ENCODE measurements at regions of chrX and their contacts with region 1.

Region 1: DNA sequence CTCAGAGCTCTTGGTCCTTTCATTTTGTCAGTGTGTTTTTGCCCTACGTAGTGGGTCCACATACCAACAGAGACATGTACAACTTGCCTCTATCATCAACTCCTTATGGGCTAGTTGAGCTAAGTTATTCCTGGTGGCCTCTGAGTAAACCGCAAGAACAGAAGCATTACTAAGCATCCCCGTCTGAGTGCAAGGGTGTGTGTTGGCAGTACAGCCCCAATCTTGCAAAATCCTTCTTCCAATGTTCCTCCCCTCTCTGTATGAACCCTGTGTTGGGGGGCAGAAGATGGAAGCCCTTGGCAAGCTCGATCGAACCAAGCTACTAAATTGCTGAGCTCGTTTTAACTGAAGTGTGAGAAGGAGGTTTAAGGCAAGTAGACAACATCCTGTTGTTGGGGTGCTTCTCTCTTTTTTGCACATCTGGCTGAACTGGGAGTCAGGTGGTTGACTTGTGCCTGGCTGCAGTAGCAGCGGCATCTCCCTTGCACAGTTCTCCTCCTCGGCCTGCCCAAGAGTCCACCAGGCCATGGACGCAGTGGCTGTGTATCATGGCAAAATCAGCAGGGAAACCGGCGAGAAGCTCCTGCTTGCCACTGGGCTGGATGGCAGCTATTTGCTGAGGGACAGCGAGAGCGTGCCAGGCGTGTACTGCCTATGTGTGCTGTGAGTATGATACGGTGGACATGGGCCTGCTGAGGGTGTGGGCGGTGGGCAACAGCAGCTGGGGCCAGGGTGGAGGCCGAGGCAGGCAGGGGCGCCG is at the start of gene SH2D1A:
- DNase-seq: peak; percentile 29
- H3K4me3 Mint-ChIP-seq: peak within 1 kb of the TSS; percentile 86
- H3K27ac Mint-ChIP-seq: peak within 1 kb of the TSS; percentile 95
- H3K4me1 Mint-ChIP-seq: peaks cover 45% of the 10 kb centered on the region
- H3K27me3 Mint-ChIP-seq: no peaks in the 10 kb centered on the region
- total RNA-seq, gene SH2D1A: 17.0 to 17.2 TPM

Region 2: GRCh38 chrX:123450221-123450620 is 896.1 kb before region 1 on chrX:
- CTCF ChIA-PET with region 1: no interaction called
- intact Hi-C with region 1: no loop called
- DNase-seq: no peak
- H3K4me3 Mint-ChIP-seq: no peak overlapping the region
- H3K27ac Mint-ChIP-seq: no peak overlapping the region
- H3K4me1 Mint-ChIP-seq: no peaks in the 10 kb centered on the region
- H3K27me3 Mint-ChIP-seq: no peaks in the 10 kb centered on the region

Region 3: GRCh38 chrX:123833387-123833786 is 512.9 kb before region 1 on chrX:
- CTCF ChIA-PET with region 1: no interaction called
- intact Hi-C with region 1: loop called (anchors 10 kb)
- DNase-seq: peak; percentile 71
- H3K4me3 Mint-ChIP-seq: no peak overlapping the region
- H3K27ac Mint-ChIP-seq: no peak overlapping the region
- H3K4me1 Mint-ChIP-seq: peaks cover 8% of the 10 kb centered on the region
- H3K27me3 Mint-ChIP-seq: peaks cover 7% of the 10 kb centered on the region

Region 4: GRCh38 chrX:123878252-123878721 is 468.0 kb before region 1 on chrX:
- CTCF ChIA-PET with region 1: no interaction called
- intact Hi-C with region 1: loop called (anchors 5 kb)
- DNase-seq: no peak
- H3K4me3 Mint-ChIP-seq: no peak overlapping the region
- H3K27ac Mint-ChIP-seq: no peak overlapping the region
- H3K4me1 Mint-ChIP-seq: peaks cover 34% of the 10 kb centered on the region
- H3K27me3 Mint-ChIP-seq: no peaks in the 10 kb centered on the region

Region 5: DNA sequence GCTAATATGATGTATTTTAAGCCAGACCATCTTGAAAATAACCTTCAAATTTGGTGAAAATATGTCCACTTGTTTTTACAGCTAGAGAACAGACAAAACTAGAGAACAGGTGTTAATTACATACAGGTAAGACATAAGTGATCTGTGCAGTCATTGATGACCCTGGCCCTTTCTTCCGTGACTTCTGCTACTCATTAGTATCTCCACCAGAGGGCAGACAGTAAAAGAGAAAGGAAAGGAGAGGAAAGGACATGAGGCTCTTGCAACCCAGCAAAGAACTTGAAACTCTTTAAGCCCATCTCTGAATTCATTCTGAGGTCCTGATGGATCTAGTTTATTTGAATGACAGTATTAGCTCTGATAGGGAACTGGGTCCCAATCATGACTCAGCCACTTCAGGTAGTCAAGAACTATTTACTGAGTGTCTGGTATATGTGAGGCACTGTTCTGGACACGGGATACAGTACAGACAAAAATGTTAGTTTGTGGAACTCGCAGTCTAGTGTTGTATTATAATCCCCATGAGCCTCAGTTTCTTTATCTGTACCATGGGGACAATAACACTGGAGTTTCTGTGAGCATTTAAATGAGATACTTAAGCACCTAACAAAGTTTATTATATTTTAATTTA is 134.9 kb before region 1 on chrX:
- CTCF ChIA-PET with region 1: interaction called, 4 read pairs
- intact Hi-C with region 1: loop called (anchors 1 kb)
- DNase-seq: peak; percentile 27
- H3K4me3 Mint-ChIP-seq: no peak overlapping the region
- H3K27ac Mint-ChIP-seq: no peak overlapping the region
- H3K4me1 Mint-ChIP-seq: peaks cover 38% of the 10 kb centered on the region
- H3K27me3 Mint-ChIP-seq: no peaks in the 10 kb centered on the region

Region 6: DNA sequence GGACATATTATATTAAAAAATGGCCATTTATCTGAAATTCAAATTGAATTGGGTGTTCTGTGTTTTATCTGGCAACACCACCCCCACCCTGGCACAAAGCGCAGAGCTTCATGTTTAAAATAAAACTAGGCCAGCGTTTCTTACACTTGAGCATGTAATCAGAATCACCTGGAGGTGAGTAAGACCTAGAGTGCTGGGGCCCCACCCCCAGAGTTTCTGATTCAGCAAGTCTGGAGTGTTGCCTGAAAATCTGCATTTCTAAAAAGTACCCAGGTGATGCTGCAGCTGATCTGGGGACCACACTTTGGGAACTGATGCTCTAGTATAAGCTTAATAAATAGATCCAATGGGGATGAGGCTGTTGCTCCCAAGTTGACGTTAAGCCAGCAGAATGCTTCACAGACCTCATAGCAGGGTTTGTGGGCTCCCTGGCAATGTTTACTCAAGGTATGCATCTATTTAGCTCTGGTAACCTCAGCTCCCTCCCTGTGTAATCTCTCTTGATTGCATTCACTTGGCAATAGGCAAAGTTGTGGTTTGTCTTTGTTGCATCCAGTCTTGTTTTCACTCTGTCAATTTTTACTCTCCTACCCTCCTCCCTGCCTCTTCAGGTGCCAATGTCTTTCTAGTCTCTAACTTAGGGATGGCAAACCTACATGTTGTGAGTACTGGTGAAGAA is 113.6 kb before region 1 on chrX:
- CTCF ChIA-PET with region 1: interaction called, 3 read pairs
- intact Hi-C with region 1: loop called (anchors 1 kb)
- DNase-seq: peak; percentile 80
- H3K4me3 Mint-ChIP-seq: no peak overlapping the region
- H3K27ac Mint-ChIP-seq: no peak overlapping the region
- H3K4me1 Mint-ChIP-seq: peaks cover 19% of the 10 kb centered on the region
- H3K27me3 Mint-ChIP-seq: no peaks in the 10 kb centered on the region

Region 7: DNA sequence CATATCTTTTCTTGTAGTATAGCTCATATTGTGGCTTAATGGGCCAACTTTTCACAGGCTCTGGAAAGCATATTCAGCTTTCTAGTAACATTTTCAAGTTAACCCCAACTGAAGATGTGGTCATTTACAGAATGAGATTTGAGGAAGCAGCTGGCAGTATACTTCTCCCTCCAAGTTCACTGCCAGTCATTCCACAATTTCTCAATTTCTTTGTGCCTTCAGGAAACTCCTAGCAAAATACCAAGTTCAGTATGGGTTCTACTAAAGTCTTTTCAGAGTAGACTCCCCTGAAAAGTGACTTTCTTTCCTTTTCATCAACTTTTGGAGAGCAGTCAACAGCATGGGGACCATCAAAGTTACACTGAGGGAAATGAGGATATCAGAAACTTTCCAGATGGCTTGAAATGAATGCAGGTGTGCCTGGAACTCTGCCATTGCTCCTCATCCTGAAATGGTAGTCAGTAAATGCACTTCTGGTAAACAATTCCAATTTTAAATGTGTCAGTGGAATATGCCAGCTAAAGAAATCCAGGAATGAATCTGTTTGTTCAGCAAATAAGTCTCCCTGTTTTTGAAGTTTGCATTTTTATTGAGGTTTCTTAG is 95.4 kb before region 1 on chrX:
- CTCF ChIA-PET with region 1: no interaction called
- intact Hi-C with region 1: no loop called
- DNase-seq: no peak
- H3K4me3 Mint-ChIP-seq: no peak overlapping the region
- H3K27ac Mint-ChIP-seq: no peak overlapping the region
- H3K4me1 Mint-ChIP-seq: peaks cover 4% of the 10 kb centered on the region
- H3K27me3 Mint-ChIP-seq: no peaks in the 10 kb centered on the region

Region 8: DNA sequence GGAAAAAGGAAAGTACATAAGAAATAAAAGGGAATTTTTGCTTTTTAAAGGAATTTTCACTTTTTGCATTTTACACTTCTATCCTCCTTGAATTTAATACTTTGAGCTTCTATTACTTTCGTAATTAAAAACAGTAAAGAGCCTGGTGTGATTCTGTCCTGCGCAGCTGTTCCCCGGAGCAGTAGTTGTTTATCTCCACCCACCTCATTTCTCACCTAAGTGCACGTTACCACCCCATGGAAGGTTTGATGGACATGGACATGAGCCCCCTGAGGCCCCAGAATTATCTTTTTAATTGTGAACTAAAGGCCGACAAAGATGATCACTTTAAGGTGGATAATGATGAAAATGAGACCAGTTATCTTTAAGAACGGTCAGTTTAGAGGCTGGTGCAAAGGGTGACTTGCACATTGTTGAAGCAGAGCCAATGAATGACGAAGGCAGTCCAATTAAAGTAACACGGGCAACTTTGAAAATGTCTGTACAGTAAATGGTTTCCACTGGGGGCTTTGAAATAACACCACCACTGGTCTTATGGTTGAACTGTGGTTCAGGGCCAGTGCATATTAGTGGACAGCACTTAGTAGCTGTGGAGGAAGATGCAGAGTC is 65.9 kb before region 1 on chrX:
- CTCF ChIA-PET with region 1: no interaction called
- intact Hi-C with region 1: loop called (anchors 5 kb)
- DNase-seq: no peak
- H3K4me3 Mint-ChIP-seq: no peak overlapping the region
- H3K27ac Mint-ChIP-seq: peak overlapping the region; percentile 46
- H3K4me1 Mint-ChIP-seq: peaks cover 17% of the 10 kb centered on the region
- H3K27me3 Mint-ChIP-seq: no peaks in the 10 kb centered on the region

Region 9: GRCh38 chrX:124325732-124326131 is 20.6 kb before region 1 on chrX:
- CTCF ChIA-PET with region 1: no interaction called
- intact Hi-C with region 1: loop called (anchors 2 kb)
- DNase-seq: no peak
- H3K4me3 Mint-ChIP-seq: no peak overlapping the region
- H3K27ac Mint-ChIP-seq: no peak overlapping the region
- H3K4me1 Mint-ChIP-seq: peaks cover 23% of the 10 kb centered on the region
- H3K27me3 Mint-ChIP-seq: no peaks in the 10 kb centered on the region

Region 10: GRCh38 chrX:124690495-124690894 is 344.2 kb after region 1 on chrX:
- CTCF ChIA-PET with region 1: no interaction called
- intact Hi-C with region 1: no loop called
- DNase-seq: no peak
- H3K4me3 Mint-ChIP-seq: no peak overlapping the region
- H3K27ac Mint-ChIP-seq: no peak overlapping the region
- H3K4me1 Mint-ChIP-seq: no peaks in the 10 kb centered on the region
- H3K27me3 Mint-ChIP-seq: no peaks in the 10 kb centered on the region